Upper lobe of right lung (tissue), 1 donor: ENCODE measurements at regions of chr10 and their contacts with region 1.

Region 1: GRCh38 chr10:73879296-73880173 is 5.2 kb upstream of the CAMK2G start:
- DNase-seq: peak; percentile 94
- ATAC-seq: peak; percentile 97
- H3K4me3 ChIP-seq: no peak overlapping the region
- H3K27ac ChIP-seq: no peak overlapping the region
- H3K4me1 ChIP-seq: peaks cover 6% of the 10 kb centered on the region
- H3K27me3 ChIP-seq: no peaks in the 10 kb centered on the region
- CTCF ChIP-seq: peak; percentile 97

Region 2: DNA sequence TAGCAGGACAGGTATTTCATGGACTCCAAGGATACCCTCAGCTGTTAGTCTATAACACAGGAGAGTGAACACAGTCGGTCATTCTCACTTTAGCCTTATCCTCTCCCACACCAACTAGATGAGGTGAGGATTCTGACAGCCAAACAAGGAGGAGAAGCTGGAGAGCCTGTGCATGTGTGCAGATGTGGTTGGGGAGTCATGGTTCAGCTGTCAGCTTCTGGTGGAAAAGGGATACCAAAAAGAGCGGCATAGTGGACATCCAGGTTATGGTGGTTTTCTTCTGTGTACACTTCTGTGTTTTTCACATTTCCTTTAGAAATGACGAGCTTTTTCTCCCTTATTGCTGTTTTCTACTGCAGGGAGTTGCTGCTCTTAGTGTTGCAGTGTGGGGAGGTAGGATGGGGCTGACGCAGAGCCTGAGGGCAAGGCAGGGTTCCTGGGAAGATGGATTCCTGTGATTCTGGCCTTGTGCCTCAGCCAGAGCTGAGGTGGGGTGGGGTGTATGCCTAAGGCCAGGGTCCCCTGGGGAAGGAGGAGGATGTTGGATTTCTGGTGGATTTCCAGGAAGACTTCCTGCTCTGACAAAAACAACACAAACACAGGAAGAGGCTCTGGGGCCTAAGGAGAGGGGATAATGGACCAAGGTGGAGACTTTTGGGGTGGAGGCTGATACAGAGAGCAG is 57.9 kb after region 1 on chr10:
- intact Hi-C with region 1: loop called (anchors 5 kb)
- DNase-seq: no peak
- ATAC-seq: no peak
- H3K4me3 ChIP-seq: no peak overlapping the region
- H3K27ac ChIP-seq: peak overlapping the region; percentile 2
- H3K4me1 ChIP-seq: peaks cover 10% of the 10 kb centered on the region
- H3K27me3 ChIP-seq: no peaks in the 10 kb centered on the region
- CTCF ChIP-seq: no peak

Region 3: DNA sequence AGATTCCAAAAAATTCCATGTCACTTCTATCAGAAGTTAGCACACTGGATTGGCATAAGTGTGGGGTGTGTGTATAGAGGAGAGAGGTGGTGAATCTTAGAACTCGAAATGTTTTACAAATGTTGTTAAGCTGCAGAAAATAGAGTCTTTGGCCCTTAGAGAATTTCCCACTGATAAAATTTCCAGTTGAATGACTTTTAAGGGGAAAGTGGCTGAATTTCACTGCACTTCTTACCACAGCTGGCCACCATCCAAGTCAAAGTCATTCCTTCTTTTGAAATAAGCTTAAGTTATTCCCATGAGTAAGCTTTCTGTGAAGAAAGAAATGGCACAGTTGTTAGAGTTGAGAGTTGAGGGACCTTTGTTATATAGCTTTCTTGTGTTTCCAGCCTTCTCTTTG is 132.2 kb after region 1 on chr10:
- intact Hi-C with region 1: no loop called
- DNase-seq: no peak
- ATAC-seq: peak; percentile 39
- H3K4me3 ChIP-seq: no peak overlapping the region
- H3K27ac ChIP-seq: no peak overlapping the region
- H3K4me1 ChIP-seq: peaks cover 39% of the 10 kb centered on the region
- H3K27me3 ChIP-seq: no peaks in the 10 kb centered on the region
- CTCF ChIP-seq: no peak

Region 4: DNA sequence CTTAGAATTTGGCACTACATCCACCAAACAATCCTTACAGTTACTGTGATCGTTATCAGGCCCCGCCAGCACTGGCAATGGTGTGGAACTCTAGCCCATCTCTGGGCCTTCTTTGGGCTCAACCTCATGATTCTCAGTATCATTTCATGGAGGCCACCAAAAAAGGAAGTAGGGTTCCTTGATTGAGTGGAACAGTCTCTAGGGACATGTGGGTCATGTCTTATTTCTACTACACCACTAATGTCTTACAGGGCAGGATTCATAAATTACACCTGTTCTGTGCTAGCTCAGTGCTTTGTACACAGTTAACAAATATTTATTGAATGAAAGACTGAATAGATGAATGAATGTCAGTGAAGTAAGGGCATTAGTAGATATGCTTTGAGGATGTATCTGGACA is 217.2 kb after region 1 on chr10:
- intact Hi-C with region 1: loop called (anchors 10 kb)
- DNase-seq: no peak
- ATAC-seq: no peak
- H3K4me3 ChIP-seq: no peak overlapping the region
- H3K27ac ChIP-seq: no peak overlapping the region
- H3K4me1 ChIP-seq: no peaks in the 10 kb centered on the region
- H3K27me3 ChIP-seq: no peaks in the 10 kb centered on the region
- CTCF ChIP-seq: no peak